Adrenal gland (tissue), 19 donors: ENCODE measurements at regions of chr4 and their contacts with region 1.

Region 1: DNA sequence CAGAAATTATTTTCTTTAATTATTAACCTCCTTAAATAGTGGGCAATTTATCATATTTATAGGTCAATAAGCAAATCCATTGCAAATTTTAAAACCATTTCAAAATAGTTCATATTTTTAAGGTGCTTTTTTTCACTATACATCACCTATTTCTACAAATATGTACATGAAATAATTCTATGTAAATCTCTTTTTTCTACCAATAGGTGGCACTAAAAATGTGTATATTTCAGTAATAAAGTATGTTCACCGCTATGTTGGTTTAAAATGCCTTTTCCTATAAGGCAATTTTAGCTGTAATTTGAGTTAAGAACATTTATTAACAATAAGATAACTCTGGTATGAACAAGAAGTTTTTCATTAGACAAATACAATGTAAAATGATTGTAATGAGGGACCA is 672.2 kb downstream of the KCTD8 start:
- DNase-seq: no peak
- H3K4me3 ChIP-seq: no peak overlapping the region
- H3K27ac ChIP-seq: no peak overlapping the region
- H3K4me1 ChIP-seq: no peaks in the 10 kb centered on the region
- H3K27me3 ChIP-seq: no peaks in the 10 kb centered on the region
- CTCF ChIP-seq: peak in 4 of 6 experiments; percentile 16 to 39 (median 28)
- POLR2A ChIP-seq: no peak

Region 2: DNA sequence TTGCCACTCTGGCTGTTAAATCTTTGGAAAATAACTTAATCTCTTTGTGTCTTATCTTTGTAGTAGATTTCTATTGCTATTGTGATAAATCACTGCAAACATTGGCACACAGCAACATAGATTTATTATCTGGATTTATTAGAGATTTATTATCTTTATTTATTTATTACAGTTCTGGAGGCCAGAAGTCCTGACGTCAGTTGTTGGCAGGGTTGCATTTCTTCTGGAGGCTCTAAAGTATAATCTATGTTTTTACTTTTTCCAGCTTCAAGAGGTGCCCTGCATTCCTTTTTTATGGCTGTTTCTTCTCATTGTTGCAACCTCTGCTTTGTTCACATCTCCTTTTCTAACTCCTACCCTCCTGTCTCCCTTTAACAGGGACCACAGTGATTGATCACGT is 341.1 kb before region 1 on chr4:
- intact Hi-C with region 1: no loop called
- DNase-seq: peak in 5 of 7 donors; percentile 17 to 69 (median 30)
- H3K4me3 ChIP-seq: no peak overlapping the region
- H3K27ac ChIP-seq: no peak overlapping the region
- H3K4me1 ChIP-seq: no peaks in the 10 kb centered on the region
- H3K27me3 ChIP-seq: no peaks in the 10 kb centered on the region
- CTCF ChIP-seq: no peak
- POLR2A ChIP-seq: no peak

Region 3: GRCh38 chr4:44493924-44494323 is 717.6 kb after region 1 on chr4:
- intact Hi-C with region 1: loop called in 1 of 2 experiments (anchors 10 kb)
- DNase-seq: peak in 3 of 7 donors; percentile 14 to 24 (median 16)
- H3K4me3 ChIP-seq: no peak overlapping the region
- H3K27ac ChIP-seq: no peak overlapping the region
- H3K4me1 ChIP-seq: no peaks in the 10 kb centered on the region
- H3K27me3 ChIP-seq: no peaks in the 10 kb centered on the region
- CTCF ChIP-seq: peak in 4 of 6 experiments; percentile 40 to 48 (median 44)
- POLR2A ChIP-seq: no peak